Activated CD8-positive, alpha-beta T cell treated with anti-CD3 and anti-CD28 coated beads for 36 hours (primary cell): ENCODE measurements at regions of chr18 and their contacts with region 1.

Region 1: DNA sequence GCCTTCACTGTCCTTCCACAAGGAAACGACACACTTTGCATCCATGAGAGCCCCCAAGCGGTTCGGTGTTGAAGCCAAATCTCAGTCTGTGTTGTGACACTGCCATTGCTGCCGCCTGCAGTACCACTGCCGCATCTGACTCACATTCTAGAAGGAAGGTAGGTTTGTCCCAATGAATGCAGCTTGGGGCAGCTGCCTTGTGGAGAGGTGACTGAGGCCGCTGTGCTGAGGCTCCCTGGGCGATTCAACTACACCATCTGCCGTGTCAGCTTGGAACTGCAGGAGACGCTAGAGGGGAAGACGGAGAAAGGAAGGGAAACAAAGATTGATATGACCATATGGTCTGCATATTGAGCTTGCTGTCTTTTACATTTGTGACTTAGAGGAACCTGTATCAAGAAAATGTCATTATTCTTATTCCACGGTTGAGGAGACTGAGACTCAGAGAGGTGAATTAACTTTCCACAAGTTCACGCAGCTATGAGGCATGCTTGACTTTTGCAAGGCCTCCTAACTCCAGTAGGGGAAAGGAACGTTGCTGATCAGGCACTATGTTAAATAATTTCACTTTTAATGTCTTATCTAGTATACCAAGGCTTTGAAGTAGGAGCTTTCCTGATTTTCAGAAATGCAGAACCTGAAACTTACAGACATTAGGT is 43.5 kb upstream of the LMAN1 start:
- DNase-seq: peak; percentile 87
- ATAC-seq: peak; percentile 100
- H3K4me3 Mint-ChIP-seq: no peak overlapping the region
- H3K27ac Mint-ChIP-seq: no peak overlapping the region
- H3K4me1 Mint-ChIP-seq: no peaks in the 10 kb centered on the region
- H3K27me3 Mint-ChIP-seq: peaks cover 7% of the 10 kb centered on the region
- CTCF ChIP-seq: peak; percentile 97

Region 2: DNA sequence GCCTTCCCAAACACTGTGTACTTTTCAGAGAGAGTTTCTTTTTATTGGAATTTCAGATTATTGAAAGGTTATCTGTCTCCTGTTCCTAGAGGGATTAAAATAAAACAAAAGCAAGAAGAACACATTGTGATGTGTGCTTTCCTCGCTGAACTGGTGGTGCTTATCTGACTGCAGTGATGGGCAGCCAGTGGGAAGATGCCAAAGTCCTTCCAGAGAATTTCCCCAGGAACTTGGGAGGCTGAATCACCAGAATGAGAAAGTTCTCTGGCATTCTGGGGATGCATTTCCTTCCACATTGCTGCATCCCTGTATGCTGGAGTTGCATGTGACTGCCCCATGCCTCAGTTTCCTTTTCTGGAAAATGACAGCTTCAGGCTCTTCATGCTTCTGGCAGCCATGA is 316.8 kb before region 1 on chr18:
- CTCF ChIA-PET with region 1: interaction called, 20 read pairs
- POLR2A ChIA-PET with region 1: no interaction called
- intact Hi-C with region 1: no loop called
- DNase-seq: no peak
- ATAC-seq: no peak
- H3K4me3 Mint-ChIP-seq: no peak overlapping the region
- H3K27ac Mint-ChIP-seq: no peak overlapping the region
- H3K4me1 Mint-ChIP-seq: peaks cover 7% of the 10 kb centered on the region
- H3K27me3 Mint-ChIP-seq: peaks cover 16% of the 10 kb centered on the region
- CTCF ChIP-seq: no peak

Region 3: GRCh38 chr18:59268721-59269562 is 133.6 kb before region 1 on chr18:
- CTCF ChIA-PET with region 1: interaction called, 14 read pairs
- POLR2A ChIA-PET with region 1: no interaction called
- intact Hi-C with region 1: no loop called
- DNase-seq: peak; percentile 74
- ATAC-seq: peak; percentile 83
- H3K4me3 Mint-ChIP-seq: no peak overlapping the region
- H3K27ac Mint-ChIP-seq: no peak overlapping the region
- H3K4me1 Mint-ChIP-seq: peaks cover 23% of the 10 kb centered on the region
- H3K27me3 Mint-ChIP-seq: peaks cover 81% of the 10 kb centered on the region
- CTCF ChIP-seq: no peak

Region 4: GRCh38 chr18:59308248-59308937 is 94.2 kb before region 1 on chr18:
- CTCF ChIA-PET with region 1: interaction called, 219 read pairs
- POLR2A ChIA-PET with region 1: interaction called, 3 read pairs
- intact Hi-C with region 1: loop called (anchors 2 kb)
- DNase-seq: peak; percentile 71
- ATAC-seq: peak; percentile 91
- H3K4me3 Mint-ChIP-seq: peak overlapping the region; percentile 36
- H3K27ac Mint-ChIP-seq: no peak overlapping the region
- H3K4me1 Mint-ChIP-seq: no peaks in the 10 kb centered on the region
- H3K27me3 Mint-ChIP-seq: peaks cover 33% of the 10 kb centered on the region
- CTCF ChIP-seq: peak; percentile 83

Region 5: DNA sequence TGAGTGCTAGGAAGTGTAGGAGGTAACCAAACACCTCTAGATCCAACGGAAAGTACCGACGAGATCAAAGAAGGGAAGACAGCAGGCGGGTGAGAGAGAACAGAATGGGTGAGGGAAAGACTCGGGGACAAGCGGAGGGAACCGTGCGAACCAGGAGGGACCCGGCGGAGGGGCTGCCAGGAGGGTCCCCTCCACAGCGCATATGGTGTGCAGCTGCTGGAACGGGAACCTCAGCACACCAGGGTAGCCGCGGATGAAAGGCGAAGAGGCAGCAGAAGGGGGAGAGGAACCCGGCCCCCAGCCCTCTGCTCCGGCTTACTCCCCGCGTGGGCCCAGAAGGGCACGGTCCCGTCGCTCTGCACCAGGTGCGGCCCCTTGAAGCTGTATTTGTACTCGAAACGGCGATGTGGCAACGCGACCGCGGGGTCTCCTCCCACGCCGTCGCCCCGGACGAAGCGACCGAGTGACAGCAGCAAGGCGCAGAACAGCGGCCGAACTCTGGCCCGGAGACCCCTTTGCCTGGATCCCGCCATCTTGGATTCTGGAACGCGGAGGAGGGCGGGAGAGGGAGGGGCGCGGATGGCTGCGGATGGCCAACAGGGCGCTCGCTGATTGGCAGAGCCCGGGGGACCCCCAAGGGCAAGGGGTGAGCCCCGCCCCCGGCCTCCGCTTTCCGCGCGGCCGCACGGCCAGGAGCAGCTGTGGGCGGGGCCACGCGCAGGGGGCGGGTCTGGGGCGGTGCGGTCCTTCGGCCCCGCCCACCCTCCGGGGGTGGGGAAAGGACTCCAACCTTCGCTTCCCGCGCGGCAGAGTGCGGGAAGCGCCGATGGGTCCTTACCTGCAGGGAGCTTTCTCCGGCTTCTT is 43.6 kb before region 1 on chr18 and contains the start of gene LMAN1:
- CTCF ChIA-PET with region 1: interaction called, 18 read pairs
- POLR2A ChIA-PET with region 1: no interaction called
- intact Hi-C with region 1: no loop called
- DNase-seq: peak; percentile 96
- ATAC-seq: peak; percentile 95
- H3K4me3 Mint-ChIP-seq: peak within 1 kb of the TSS; percentile 87
- H3K27ac Mint-ChIP-seq: peak within 1 kb of the TSS; percentile 91
- H3K4me1 Mint-ChIP-seq: peaks cover 36% of the 10 kb centered on the region
- H3K27me3 Mint-ChIP-seq: no peaks in the 10 kb centered on the region
- CTCF ChIP-seq: no peak
- total RNA-seq, gene LMAN1: 126 to 140 TPM

Region 6: DNA sequence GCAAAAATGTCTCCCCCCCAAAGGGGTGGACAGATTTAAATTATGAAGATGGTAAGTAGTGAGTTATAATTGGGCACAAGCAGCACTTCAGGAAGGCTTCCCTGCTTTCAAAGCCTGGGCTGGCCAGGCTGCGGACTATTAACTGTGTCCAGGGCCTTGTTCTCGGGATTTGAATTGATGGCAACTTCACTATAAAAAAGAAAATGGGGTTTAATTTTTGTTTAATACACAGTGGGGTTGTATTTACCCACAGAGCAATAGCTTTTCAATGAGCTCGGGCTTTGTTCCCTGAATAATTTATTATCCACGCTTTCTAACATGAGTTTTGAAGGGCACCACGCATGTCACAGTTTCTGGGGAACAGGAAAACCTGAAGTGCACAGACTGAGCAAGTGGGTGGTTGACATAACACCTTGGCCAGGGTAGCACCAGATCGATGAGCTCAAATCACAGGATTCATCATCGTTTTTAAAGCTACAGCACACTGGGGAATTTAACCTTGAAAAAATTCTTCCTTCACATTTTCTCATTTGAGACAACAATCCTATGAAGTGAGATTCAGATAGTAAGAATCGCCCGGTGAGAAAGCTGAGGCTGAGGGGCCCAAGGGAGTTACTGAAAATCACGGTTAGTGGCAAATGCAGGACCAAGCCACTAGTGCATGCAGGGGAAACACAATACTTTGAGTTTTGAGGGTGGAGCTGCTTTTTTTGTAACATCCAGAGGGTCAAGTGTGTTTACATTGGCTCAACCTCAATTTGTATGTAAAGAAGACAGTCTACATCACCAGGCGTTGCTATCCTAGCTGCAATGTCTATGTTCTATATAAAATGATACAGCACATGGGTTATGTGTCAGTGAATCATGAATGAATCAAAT is 14.6 kb before region 1 on chr18:
- CTCF ChIA-PET with region 1: interaction called, 17 read pairs
- POLR2A ChIA-PET with region 1: no interaction called
- intact Hi-C with region 1: no loop called
- DNase-seq: no peak
- ATAC-seq: no peak
- H3K4me3 Mint-ChIP-seq: no peak overlapping the region
- H3K27ac Mint-ChIP-seq: no peak overlapping the region
- H3K4me1 Mint-ChIP-seq: no peaks in the 10 kb centered on the region
- H3K27me3 Mint-ChIP-seq: peaks cover 13% of the 10 kb centered on the region
- CTCF ChIP-seq: no peak

Region 7: GRCh38 chr18:59547581-59548182 is 145.1 kb after region 1 on chr18:
- CTCF ChIA-PET with region 1: no interaction called
- POLR2A ChIA-PET with region 1: no interaction called
- intact Hi-C with region 1: no loop called
- DNase-seq: no peak
- ATAC-seq: no peak
- H3K4me3 Mint-ChIP-seq: no peak overlapping the region
- H3K27ac Mint-ChIP-seq: no peak overlapping the region
- H3K4me1 Mint-ChIP-seq: no peaks in the 10 kb centered on the region
- H3K27me3 Mint-ChIP-seq: no peaks in the 10 kb centered on the region
- CTCF ChIP-seq: no peak

Region 8: GRCh38 chr18:59606193-59607077 is 203.9 kb after region 1 on chr18:
- CTCF ChIA-PET with region 1: no interaction called
- POLR2A ChIA-PET with region 1: no interaction called
- intact Hi-C with region 1: no loop called
- DNase-seq: no peak
- ATAC-seq: no peak
- H3K4me3 Mint-ChIP-seq: no peak overlapping the region
- H3K27ac Mint-ChIP-seq: no peak overlapping the region
- H3K4me1 Mint-ChIP-seq: no peaks in the 10 kb centered on the region
- H3K27me3 Mint-ChIP-seq: no peaks in the 10 kb centered on the region
- CTCF ChIP-seq: no peak